ENCODE measurements at regions of chr15 and their contacts with region 1.

Region 1: GRCh38 chr15:79798311-79798710 is 98.5 kb downstream of the MTHFS start:
- DNase-seq: no peak
- H3K4me3 ChIP-seq: no peak overlapping the region
- H3K27ac ChIP-seq: no peak overlapping the region
- H3K4me1 ChIP-seq: no peaks in the 10 kb centered on the region
- H3K27me3 ChIP-seq: no peaks in the 10 kb centered on the region
- CTCF ChIP-seq: no peak
- EP300 ChIP-seq: no peak
- POLR2A ChIP-seq: no peak

Region 2: GRCh38 chr15:79769924-79770759 is 28.2 kb before region 1 on chr15:
- in situ Hi-C with region 1: no loop called
- intact Hi-C with region 1: loop called (anchors 1 kb)
- DNase-seq: no peak
- H3K4me3 ChIP-seq: no peak overlapping the region
- H3K27ac ChIP-seq: no peak overlapping the region
- H3K4me1 ChIP-seq: no peaks in the 10 kb centered on the region
- H3K27me3 ChIP-seq: no peaks in the 10 kb centered on the region
- CTCF ChIP-seq: no peak
- EP300 ChIP-seq: no peak
- POLR2A ChIP-seq: no peak